Cardiac septum (tissue), 1 donor: ENCODE measurements at regions of chr3 and their contacts with region 1.

Region 1: DNA sequence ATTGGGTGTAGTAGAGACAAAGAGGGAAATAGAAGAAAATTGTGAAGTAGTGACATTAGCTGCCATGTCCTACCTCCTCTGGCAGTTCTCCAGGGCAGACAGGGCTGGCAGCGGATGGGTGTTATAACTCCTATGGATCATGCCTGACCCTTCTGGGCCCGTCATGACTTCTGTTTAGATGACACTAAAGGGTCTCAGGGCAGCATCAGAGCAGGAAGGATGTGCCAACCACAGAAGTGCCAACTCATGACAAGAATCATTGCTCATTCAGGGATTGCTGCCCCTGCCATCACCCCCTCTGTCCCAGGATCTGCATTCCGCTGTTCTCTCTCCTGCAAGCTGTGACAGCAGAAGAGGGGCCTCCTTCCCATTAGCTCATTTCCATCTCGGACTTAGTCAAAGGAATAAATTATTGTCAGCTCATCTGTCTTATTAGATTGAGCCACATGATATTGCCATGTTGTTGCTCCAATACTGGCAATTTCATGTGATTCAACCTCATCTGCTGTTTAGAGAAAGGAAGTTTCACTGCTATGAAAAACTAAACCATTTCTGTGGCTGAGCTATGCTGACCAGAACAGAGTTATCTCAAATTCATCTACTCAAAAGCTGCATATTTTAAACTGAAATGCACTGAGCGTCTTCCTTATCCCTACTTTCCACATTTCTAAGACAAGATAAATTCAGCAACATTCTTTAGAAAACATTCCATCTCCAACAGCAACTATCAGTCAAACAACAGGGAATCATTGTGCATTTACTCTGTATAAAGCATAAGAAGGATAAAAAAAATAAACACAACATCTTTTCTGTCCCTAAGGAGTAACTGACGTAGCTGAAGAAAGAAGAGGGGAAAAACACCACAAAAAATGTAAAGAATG is 271.6 kb downstream of the FHIT start:
- DNase-seq: no peak

Region 2: GRCh38 chr3:60967141-60967540 is 12.6 kb before region 1 on chr3:
- intact Hi-C with region 1: loop called (anchors 1 kb)
- DNase-seq: no peak